ENCODE measurements at regions of chr20 and their contacts with region 1.

Region 1: GRCh38 chr20:44966030-44966961 is at the start of gene STK4:
- DNase-seq: peak; percentile 96 to 98
- ATAC-seq: peak; percentile 70 to 92 (median 83)
- H3K4me3 ChIP-seq: peak within 1 kb of the TSS; percentile 87
- H3K4me3 Mint-ChIP-seq: peak within 1 kb of the TSS; percentile 97
- H3K27ac ChIP-seq: peak within 1 kb of the TSS; percentile 87
- H3K27ac Mint-ChIP-seq: peak within 1 kb of the TSS; percentile 98 to 99
- H3K4me1 ChIP-seq: peaks cover 19% of the 10 kb centered on the region
- H3K4me1 Mint-ChIP-seq: peaks cover 55 to 62% of the 10 kb centered on the region in 2 donors
- H3K27me3 ChIP-seq: no peaks in the 10 kb centered on the region
- H3K27me3 Mint-ChIP-seq: no peaks in the 10 kb centered on the region
- CTCF ChIP-seq: peak; percentile 32
- total RNA-seq, gene STK4: 351 to 394 (median 366) TPM

Region 2: GRCh38 chr20:44885392-44886265 is 80.7 kb before region 1 on chr20 and contains the start of gene YWHAB:
- intact Hi-C with region 1: loop called (anchors 2 kb)
- DNase-seq: peak; percentile 95 to 98
- ATAC-seq: peak; percentile 91 to 99 (median 94)
- H3K4me3 ChIP-seq: peak within 1 kb of the TSS; percentile 75
- H3K4me3 Mint-ChIP-seq: peak within 1 kb of the TSS; percentile 98
- H3K27ac ChIP-seq: peak within 1 kb of the TSS; percentile 86
- H3K27ac Mint-ChIP-seq: peak within 1 kb of the TSS; percentile 93 to 97
- H3K4me1 ChIP-seq: peaks cover 19% of the 10 kb centered on the region
- H3K4me1 Mint-ChIP-seq: peaks cover 48 to 62% of the 10 kb centered on the region in 2 donors
- H3K27me3 ChIP-seq: no peaks in the 10 kb centered on the region
- H3K27me3 Mint-ChIP-seq: no peaks in the 10 kb centered on the region
- CTCF ChIP-seq: no peak
- total RNA-seq, gene YWHAB: 137 to 199 (median 179) TPM

Region 3: GRCh38 chr20:44979090-44979621 is 12.9 kb after region 1 on chr20:
- intact Hi-C with region 1: loop called (anchors 1 kb)
- DNase-seq: peak; percentile 63 to 93
- ATAC-seq: peak; percentile 85 to 92 (median 91)
- H3K4me3 ChIP-seq: no peak overlapping the region
- H3K4me3 Mint-ChIP-seq: peak overlapping the region; percentile 85
- H3K27ac ChIP-seq: peak overlapping the region; percentile 85
- H3K27ac Mint-ChIP-seq: peak overlapping the region; percentile 94 to 98
- H3K4me1 ChIP-seq: peaks cover 23% of the 10 kb centered on the region
- H3K4me1 Mint-ChIP-seq: peaks cover 71 to 72% of the 10 kb centered on the region in 2 donors
- H3K27me3 ChIP-seq: no peaks in the 10 kb centered on the region
- H3K27me3 Mint-ChIP-seq: no peaks in the 10 kb centered on the region
- CTCF ChIP-seq: no peak

Region 4: DNA sequence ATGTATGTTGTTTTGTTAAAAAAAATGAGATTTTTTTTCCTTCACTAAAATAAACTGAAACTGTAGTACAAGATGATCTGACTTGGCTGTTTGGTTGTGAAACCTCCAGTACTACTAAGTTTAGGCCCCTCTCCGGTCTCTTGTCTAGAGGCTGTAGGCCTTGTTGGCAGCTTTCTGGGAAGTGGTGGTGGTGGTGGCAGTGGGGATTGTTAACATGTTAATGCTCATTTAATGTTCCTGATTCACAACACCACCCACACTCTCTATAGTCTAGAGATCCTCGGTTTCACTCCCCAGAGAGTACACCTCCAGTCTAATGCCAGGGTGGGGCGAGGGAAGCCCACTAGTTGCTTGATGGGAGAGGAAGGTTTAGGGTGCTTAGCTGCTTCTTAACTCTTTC is 24.1 kb after region 1 on chr20:
- intact Hi-C with region 1: loop called (anchors 1 kb)
- DNase-seq: peak in 1 of 2 donors; percentile 43
- ATAC-seq: peak; percentile 34 to 54 (median 50)
- H3K4me3 ChIP-seq: no peak overlapping the region
- H3K4me3 Mint-ChIP-seq: peak overlapping the region; percentile 93
- H3K27ac ChIP-seq: peak overlapping the region; percentile 79
- H3K27ac Mint-ChIP-seq: peak overlapping the region; percentile 66 to 97
- H3K4me1 ChIP-seq: peaks cover 29% of the 10 kb centered on the region
- H3K4me1 Mint-ChIP-seq: peaks cover 60 to 64% of the 10 kb centered on the region in 2 donors
- H3K27me3 ChIP-seq: no peaks in the 10 kb centered on the region
- H3K27me3 Mint-ChIP-seq: no peaks in the 10 kb centered on the region
- CTCF ChIP-seq: no peak

Region 5: DNA sequence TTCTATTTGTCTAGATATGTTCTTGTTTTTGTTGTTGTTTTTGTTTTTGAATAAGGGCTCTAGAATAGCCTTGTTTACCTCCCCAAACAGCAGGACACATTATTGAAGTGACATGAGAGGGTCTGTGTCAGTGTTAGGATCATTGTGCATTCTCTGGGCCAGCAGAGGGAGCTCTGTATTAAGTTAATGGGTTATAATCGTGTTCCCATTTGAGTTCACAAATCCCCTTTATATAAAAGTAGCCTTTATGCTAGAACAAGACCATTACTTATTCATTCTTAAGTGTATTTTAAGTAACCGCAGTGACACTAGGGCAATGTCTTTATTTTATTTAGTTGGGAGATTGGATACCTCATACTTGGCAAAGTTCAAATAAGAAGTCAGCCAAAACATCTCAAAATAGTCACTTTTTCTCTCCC is 44.8 kb after region 1 on chr20:
- intact Hi-C with region 1: loop called (anchors 5 kb)
- DNase-seq: peak in 1 of 2 donors; percentile 75
- ATAC-seq: peak; percentile 78 to 87 (median 85)
- H3K4me3 ChIP-seq: no peak overlapping the region
- H3K4me3 Mint-ChIP-seq: no peak overlapping the region
- H3K27ac ChIP-seq: no peak overlapping the region
- H3K27ac Mint-ChIP-seq: peak overlapping the region; percentile 24 to 63
- H3K4me1 ChIP-seq: no peaks in the 10 kb centered on the region
- H3K4me1 Mint-ChIP-seq: peaks cover 57 to 59% of the 10 kb centered on the region in 2 donors
- H3K27me3 ChIP-seq: no peaks in the 10 kb centered on the region
- H3K27me3 Mint-ChIP-seq: no peaks in the 10 kb centered on the region
- CTCF ChIP-seq: peak; percentile 72